ENCODE measurements at regions of chr6 and their contacts with region 1.

Region 1: DNA sequence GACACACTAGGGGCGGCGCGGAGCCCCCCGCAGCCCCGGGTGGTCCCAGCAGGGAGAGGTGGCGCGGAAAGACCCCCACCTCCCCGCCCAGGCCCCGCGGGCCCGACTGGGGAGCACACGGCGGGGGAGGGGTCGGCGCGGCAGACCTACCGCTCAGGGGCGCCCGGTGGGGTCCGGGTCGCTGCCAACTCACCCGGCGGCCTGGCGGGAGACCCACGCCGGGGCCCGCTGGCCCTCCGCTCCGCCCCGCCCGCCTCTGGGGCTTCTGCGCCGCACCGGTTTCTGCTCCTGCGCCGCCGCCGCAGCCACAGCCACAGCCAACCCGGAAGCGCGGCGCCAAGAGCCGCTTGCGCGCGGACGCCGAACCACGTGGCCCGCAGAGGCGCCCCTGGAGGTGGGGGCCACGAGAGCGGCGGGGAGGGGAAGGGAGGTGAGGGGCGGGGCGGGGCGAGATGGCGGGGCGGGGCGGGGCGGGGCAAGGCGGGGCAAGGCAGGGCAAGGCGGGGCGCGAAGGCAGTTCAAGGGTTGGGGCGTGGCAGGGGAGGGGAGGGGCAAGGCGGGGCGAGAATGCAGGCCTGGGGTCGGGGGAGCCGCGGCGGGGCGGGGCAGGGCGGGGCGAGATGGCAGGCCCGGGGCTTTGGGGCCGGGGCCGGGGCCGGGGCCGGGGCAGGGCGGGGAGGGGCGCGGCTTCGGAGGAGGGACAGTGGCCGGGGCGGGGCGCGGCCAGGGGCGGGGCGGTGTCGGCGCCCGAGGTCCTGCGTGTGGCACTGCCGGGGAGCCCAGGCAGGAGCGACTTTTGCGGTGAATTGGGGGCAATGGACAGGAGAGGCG is at the start of gene ZBTB24:
- DNase-seq: peak; percentile 82 to 88
- ATAC-seq: peak; percentile 83 to 87
- H3K4me3 ChIP-seq: peak within 1 kb of the TSS; percentile 66 to 100 (median 94)
- H3K27ac ChIP-seq: peak within 1 kb of the TSS; percentile 84 to 93 (median 88)
- H3K4me1 ChIP-seq: peaks cover 37 to 46% of the 10 kb centered on the region in 2 donors
- H3K27me3 ChIP-seq: no peaks in the 10 kb centered on the region
- CTCF ChIP-seq: no peak
- POLR2A ChIP-seq: peak; percentile 75 to 89
- total RNA-seq, gene ZBTB24: 3.7 to 10.5 (median 6.1) TPM

Region 2: GRCh38 chr6:109434456-109434855 is 48.7 kb before region 1 on chr6:
- in situ Hi-C with region 1: loop called in 1 of 4 experiments (anchors 10 kb)
- intact Hi-C with region 1: no loop called
- DNase-seq: no peak
- ATAC-seq: no peak
- H3K4me3 ChIP-seq: no peak overlapping the region
- H3K27ac ChIP-seq: no peak overlapping the region
- H3K4me1 ChIP-seq: peaks cover 3% of the 10 kb centered on the region in 2 donors
- H3K27me3 ChIP-seq: no peaks in the 10 kb centered on the region
- CTCF ChIP-seq: no peak
- POLR2A ChIP-seq: no peak

Region 3: GRCh38 chr6:109440331-109441068 is 42.6 kb before region 1 on chr6 and contains the starts of genes PPIL6 and SMPD2:
- in situ Hi-C with region 1: loop called in 1 of 4 experiments (anchors 10 kb)
- intact Hi-C with region 1: loop called (anchors 1 kb)
- DNase-seq: peak; percentile 69 to 85
- ATAC-seq: peak; percentile 90 to 92
- H3K4me3 ChIP-seq: peak within 1 kb of the TSS; percentile 73 to 96 (median 87)
- H3K27ac ChIP-seq: peak within 1 kb of the TSS; percentile 74 to 89 (median 83)
- H3K4me1 ChIP-seq: peaks cover 10 to 15% of the 10 kb centered on the region in 2 donors
- H3K27me3 ChIP-seq: no peaks in the 10 kb centered on the region
- CTCF ChIP-seq: peak in 2 of 5 experiments; percentile 36 to 40
- POLR2A ChIP-seq: peak; percentile 36 to 62
- total RNA-seq, gene PPIL6: 0.64 to 2.9 (median 1.3) TPM
- total RNA-seq, gene SMPD2: 3.9 to 7.7 (median 5.9) TPM

Region 4: GRCh38 chr6:109455502-109456282 is 27.4 kb before region 1 on chr6 and contains the start of gene MICAL1:
- in situ Hi-C with region 1: no loop called
- intact Hi-C with region 1: loop called (anchors 2 kb)
- DNase-seq: peak; percentile 39 to 60
- ATAC-seq: peak; percentile 56 to 62
- H3K4me3 ChIP-seq: peak within 1 kb of the TSS; percentile 67 to 94 (median 80)
- H3K27ac ChIP-seq: peak within 1 kb of the TSS; percentile 61 to 74 (median 72)
- H3K4me1 ChIP-seq: peaks cover 18 to 34% of the 10 kb centered on the region in 2 donors
- H3K27me3 ChIP-seq: no peaks in the 10 kb centered on the region
- CTCF ChIP-seq: peak in 3 of 5 experiments; percentile 14 to 58 (median 55)
- POLR2A ChIP-seq: peak; percentile 14 to 25
- total RNA-seq, gene MICAL1: 6.0 to 11.6 (median 8.0) TPM